ENCODE measurements at regions of chr1 and their contacts with region 1.

Region 1: GRCh38 chr1:16984717-16985116 is 4.3 kb upstream of the MFAP2 start:
- DNase-seq: no peak
- ATAC-seq: no peak
- H3K4me3 Mint-ChIP-seq: no peak overlapping the region
- H3K27ac Mint-ChIP-seq: no peak overlapping the region; the same call in 1 of the 2 replicates
- H3K4me1 Mint-ChIP-seq: peaks cover 18% of the 10 kb centered on the region
- H3K27me3 Mint-ChIP-seq: no peaks in the 10 kb centered on the region; the same call in 1 of the 2 replicates
- CTCF ChIP-seq: no peak

Region 2: DNA sequence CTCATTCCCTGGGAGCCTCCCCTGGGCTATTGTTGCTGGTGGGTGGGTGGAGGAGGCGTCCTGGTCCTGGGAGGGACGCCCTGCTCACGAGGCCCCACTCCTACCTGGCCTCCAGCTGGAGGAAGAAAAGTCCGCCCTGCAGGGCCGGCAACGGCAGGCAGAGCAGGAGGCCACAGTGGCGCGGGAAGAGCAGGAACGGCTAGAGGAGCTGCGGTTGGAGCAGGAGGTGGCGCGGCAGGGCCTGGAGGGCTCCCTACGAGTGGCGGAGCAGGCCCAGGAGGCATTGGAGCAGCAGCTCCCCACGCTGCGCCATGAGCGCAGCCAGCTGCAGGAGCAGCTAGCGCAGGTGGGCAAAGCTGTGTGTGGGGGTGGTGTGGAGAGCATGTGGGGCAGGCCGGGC is 38.1 kb before region 1 on chr1:
- CTCF ChIA-PET with region 1: interaction called, 30 read pairs
- POLR2A ChIA-PET with region 1: no interaction called
- DNase-seq: no peak
- ATAC-seq: no peak
- H3K4me3 Mint-ChIP-seq: no peak overlapping the region
- H3K27ac Mint-ChIP-seq: no peak overlapping the region
- H3K4me1 Mint-ChIP-seq: no peaks in the 10 kb centered on the region
- H3K27me3 Mint-ChIP-seq: no peaks in the 10 kb centered on the region
- CTCF ChIP-seq: no peak

Region 3: GRCh38 chr1:16960560-16961296 is 24.0 kb before region 1 on chr1:
- CTCF ChIA-PET with region 1: interaction called, 50 read pairs
- POLR2A ChIA-PET with region 1: interaction called, 3 read pairs
- DNase-seq: peak; percentile 97
- ATAC-seq: peak; percentile 89
- H3K4me3 Mint-ChIP-seq: peak overlapping the region; percentile 55
- H3K27ac Mint-ChIP-seq: peak overlapping the region; percentile 3; the same call in 1 of the 2 replicates
- H3K4me1 Mint-ChIP-seq: peaks cover 4% of the 10 kb centered on the region
- H3K27me3 Mint-ChIP-seq: no peaks in the 10 kb centered on the region
- CTCF ChIP-seq: peak; percentile 33; the same call in 1 of the 2 replicates

Region 4: DNA sequence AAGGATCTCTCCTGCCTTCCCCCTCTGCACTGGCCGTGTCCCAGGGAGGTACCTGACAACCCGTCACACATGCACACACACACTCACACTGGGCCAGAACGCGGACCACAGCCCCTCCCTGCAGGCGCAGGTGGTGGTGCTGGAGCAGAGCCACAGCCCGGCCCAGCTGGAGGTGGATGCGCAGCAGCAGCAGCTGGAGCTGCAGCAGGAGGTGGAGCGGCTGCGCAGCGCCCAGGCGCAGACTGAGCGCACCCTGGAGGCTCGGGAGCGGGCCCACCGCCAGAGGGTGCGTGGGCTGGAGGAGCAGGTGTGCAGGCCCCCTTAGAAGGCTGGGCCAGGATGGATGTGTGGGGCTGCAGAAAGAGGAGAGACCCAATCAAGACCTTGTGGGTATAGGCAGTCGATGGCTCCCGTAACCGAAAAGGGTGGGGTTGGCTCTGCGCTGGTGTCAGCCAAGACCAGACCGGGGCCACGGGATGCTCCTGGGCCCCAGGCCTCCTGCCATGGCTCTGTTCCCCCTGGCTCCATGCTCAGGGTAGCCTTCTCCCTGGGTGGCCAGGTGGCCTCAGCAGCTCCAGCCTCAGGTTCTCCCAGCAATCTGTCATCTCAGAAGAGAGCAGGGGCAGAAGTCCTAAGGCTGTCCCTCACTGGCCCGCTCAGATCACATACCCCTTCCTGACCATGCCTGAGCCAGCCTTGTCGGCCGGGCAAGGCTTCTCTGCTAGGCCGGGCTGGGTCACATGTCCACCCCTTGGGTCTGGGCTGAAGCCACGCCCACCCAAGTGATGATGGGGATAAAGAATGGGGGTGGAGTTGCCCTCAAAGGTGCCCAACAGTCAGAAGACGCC is 13.2 kb before region 1 on chr1:
- CTCF ChIA-PET with region 1: interaction called, 20 read pairs
- POLR2A ChIA-PET with region 1: no interaction called
- DNase-seq: peak; percentile 65
- ATAC-seq: peak; percentile 69
- H3K4me3 Mint-ChIP-seq: no peak overlapping the region
- H3K27ac Mint-ChIP-seq: peak overlapping the region; percentile 49; the same call in 1 of the 2 replicates
- H3K4me1 Mint-ChIP-seq: peaks cover 26% of the 10 kb centered on the region
- H3K27me3 Mint-ChIP-seq: no peaks in the 10 kb centered on the region
- CTCF ChIP-seq: no peak

Region 5: GRCh38 chr1:16999863-17000262 is 15.1 kb after region 1 on chr1:
- CTCF ChIA-PET with region 1: interaction called, 67 read pairs
- POLR2A ChIA-PET with region 1: no interaction called
- DNase-seq: no peak
- ATAC-seq: peak; percentile 51
- H3K4me3 Mint-ChIP-seq: no peak overlapping the region
- H3K27ac Mint-ChIP-seq: no peak overlapping the region
- H3K4me1 Mint-ChIP-seq: no peaks in the 10 kb centered on the region
- H3K27me3 Mint-ChIP-seq: no peaks in the 10 kb centered on the region
- CTCF ChIP-seq: no peak

Region 6: DNA sequence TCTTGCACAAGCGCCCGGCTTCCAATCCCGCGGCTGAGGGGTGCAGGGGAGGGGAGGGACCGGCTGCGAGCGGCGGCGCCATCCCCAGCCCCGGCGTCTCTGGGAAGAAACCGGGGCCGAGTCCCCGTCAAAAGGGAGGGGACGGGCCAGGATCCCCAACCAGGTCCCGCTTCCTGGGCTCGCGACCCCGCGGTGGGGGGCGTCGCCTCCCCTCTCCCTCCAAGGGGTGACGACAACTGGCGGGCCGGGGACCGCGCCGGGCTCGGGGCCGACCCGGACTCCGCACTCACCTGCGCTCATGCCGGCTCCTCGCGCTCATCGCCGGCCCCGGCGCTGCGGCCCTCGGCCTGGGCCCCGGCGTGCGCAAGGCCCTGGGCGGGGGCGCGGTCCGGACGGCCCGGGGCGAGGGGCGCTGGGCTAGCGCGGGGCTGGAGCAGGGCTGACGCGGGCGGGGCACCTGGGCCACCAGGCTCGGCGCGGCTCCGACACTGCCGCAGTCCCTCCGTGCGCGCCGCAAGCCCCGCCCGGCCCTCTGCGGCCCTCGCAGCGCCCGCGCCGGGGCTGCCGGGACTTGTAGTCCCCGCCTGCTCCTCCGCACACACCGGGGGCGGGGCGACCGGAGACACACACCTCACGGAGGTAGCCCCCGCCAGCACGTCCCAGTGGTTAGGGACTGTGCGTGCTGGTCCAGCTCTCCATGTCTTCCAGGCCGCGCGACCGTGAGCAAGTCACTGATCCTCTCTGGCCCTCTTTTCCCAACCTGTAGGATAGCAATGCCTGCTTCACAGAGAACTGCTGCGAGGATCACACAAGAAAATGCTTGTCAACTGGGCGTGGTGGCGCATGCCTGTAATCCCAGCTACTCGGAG is 27.0 kb after region 1 on chr1 and contains the start of gene ATP13A2:
- CTCF ChIA-PET with region 1: interaction called, 28 read pairs
- POLR2A ChIA-PET with region 1: interaction called, 4 read pairs
- DNase-seq: peak; percentile 94
- ATAC-seq: peak; percentile 85
- H3K4me3 Mint-ChIP-seq: peak within 1 kb of the TSS; percentile 85
- H3K27ac Mint-ChIP-seq: peak within 1 kb of the TSS; percentile 84
- H3K4me1 Mint-ChIP-seq: peaks cover 73% of the 10 kb centered on the region
- H3K27me3 Mint-ChIP-seq: no peaks in the 10 kb centered on the region
- CTCF ChIP-seq: no peak
- total RNA-seq, gene ATP13A2: 84.8 to 95.9 TPM (median 93.1 TPM) in 3 replicates

Region 7: GRCh38 chr1:17023102-17023501 is 38.4 kb after region 1 on chr1:
- CTCF ChIA-PET with region 1: interaction called, 23 read pairs
- POLR2A ChIA-PET with region 1: no interaction called
- DNase-seq: no peak
- ATAC-seq: no peak
- H3K4me3 Mint-ChIP-seq: no peak overlapping the region
- H3K27ac Mint-ChIP-seq: no peak overlapping the region
- H3K4me1 Mint-ChIP-seq: no peaks in the 10 kb centered on the region
- H3K27me3 Mint-ChIP-seq: no peaks in the 10 kb centered on the region
- CTCF ChIP-seq: no peak

Region 8: GRCh38 chr1:17125756-17126237 is 141.1 kb after region 1 on chr1:
- CTCF ChIA-PET with region 1: no interaction called
- POLR2A ChIA-PET with region 1: no interaction called
- DNase-seq: peak; percentile 96
- ATAC-seq: peak; percentile 84
- H3K4me3 Mint-ChIP-seq: no peak overlapping the region
- H3K27ac Mint-ChIP-seq: peak overlapping the region; percentile 79; the same call in 1 of the 2 replicates
- H3K4me1 Mint-ChIP-seq: peaks cover 39% of the 10 kb centered on the region
- H3K27me3 Mint-ChIP-seq: peaks cover 7% of the 10 kb centered on the region; the same call in 1 of the 2 replicates
- CTCF ChIP-seq: peak; percentile 96

Region 9: GRCh38 chr1:17148950-17149608 is 164.4 kb after region 1 on chr1:
- CTCF ChIA-PET with region 1: no interaction called
- POLR2A ChIA-PET with region 1: no interaction called
- DNase-seq: no peak
- ATAC-seq: peak; percentile 51
- H3K4me3 Mint-ChIP-seq: no peak overlapping the region
- H3K27ac Mint-ChIP-seq: no peak overlapping the region
- H3K4me1 Mint-ChIP-seq: no peaks in the 10 kb centered on the region
- H3K27me3 Mint-ChIP-seq: peaks cover 23% of the 10 kb centered on the region
- CTCF ChIP-seq: no peak